Activated B cell treated with CpG ODN at 0.5 μM for 24 hours (primary cell): ENCODE measurements at regions of chr10 and their contacts with region 1.

Region 1: DNA sequence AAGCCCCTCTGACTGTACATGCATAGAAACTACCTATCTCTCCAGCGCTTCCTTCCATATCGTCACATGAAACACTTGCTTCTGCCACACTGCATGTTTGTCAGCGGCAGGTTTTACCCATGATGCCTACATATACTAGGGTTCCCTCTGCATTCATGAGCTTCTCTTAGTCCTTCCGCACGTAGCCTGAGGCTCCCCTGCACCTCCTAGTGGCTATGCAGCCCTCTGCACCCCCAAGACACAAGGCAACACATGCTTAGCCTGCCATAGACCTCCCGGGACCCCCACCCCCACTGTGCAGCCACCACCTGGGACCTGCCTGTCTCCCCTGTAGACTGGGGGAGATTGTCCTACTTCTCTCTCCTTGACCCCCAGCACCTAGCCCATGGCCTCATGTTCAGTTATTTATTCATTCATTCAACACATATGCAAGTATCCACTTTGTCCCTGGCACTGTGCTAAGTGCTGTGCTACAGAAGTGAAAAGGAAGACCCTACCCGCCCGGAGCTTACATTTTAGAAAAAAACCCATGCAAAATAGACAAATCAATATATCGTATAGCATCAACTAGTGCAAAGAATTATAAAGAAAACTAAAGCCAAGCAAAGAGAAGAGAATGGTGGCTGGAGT is 23.5 kb downstream of the TMEM273 start:
- DNase-seq: no peak
- ATAC-seq: peak; percentile 96
- H3K4me3 Mint-ChIP-seq: no peak overlapping the region
- H3K27ac Mint-ChIP-seq: no peak overlapping the region
- H3K4me1 Mint-ChIP-seq: peaks cover 12% of the 10 kb centered on the region
- H3K27me3 Mint-ChIP-seq: no peaks in the 10 kb centered on the region
- CTCF ChIP-seq: no peak

Region 2: DNA sequence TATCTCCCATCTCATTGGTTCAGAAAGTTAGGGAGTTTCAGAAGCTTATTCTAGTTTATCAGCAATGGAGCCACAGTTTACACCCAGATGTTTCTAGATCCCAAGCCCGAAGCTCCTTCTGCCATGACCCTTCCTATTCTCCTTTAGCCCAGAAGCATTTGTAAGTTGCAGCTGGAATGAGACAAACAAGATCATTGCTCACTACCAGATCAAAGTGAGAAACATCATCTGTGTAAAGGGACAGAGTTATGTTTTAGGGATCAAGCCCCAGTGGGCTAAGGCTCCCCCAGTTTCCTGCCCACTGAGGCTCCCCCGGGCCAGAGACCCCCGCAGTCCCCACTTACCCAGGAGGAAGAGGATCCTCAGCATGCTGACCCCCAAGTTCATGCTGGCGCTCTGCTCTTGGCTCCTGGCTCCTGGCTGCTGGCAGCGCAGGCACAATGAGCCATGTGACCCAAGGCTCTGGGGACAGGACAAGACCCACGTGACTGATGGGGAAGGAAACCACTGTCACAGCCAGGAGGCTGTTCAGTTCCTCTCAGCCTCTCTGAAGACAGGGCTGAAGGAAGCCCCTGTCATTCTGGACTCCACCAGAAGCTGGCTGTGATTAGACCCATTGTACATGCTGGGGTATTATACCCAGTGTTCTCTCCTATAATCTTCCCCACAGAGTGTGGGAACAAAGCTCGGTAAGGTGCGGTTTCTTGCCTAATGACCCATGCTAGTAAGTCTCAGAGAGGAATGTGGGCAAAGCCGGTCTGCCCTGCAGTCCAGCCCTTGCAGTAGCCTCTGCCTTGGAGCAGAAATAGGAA is 23.5 kb after region 1 on chr10 and contains the start of gene TMEM273:
- CTCF ChIA-PET with region 1: interaction called, 5 read pairs
- POLR2A ChIA-PET with region 1: no interaction called
- intact Hi-C with region 1: loop called (anchors 2 kb)
- DNase-seq: no peak
- ATAC-seq: peak; percentile 75
- H3K4me3 Mint-ChIP-seq: peak within 1 kb of the TSS; percentile 82
- H3K27ac Mint-ChIP-seq: peak within 1 kb of the TSS; percentile 93
- H3K4me1 Mint-ChIP-seq: peaks cover 81% of the 10 kb centered on the region
- H3K27me3 Mint-ChIP-seq: no peaks in the 10 kb centered on the region
- CTCF ChIP-seq: no peak
- total RNA-seq, gene TMEM273: 6.7 and 8.5 TPM in 2 replicates